ENCODE measurements at regions of chr7 and their contacts with region 1.

Region 1: GRCh38 chr7:35530124-35531109 is 164.5 kb downstream of the HERPUD2 start:
- DNase-seq: no peak
- H3K4me3 ChIP-seq: no peak overlapping the region
- H3K27ac ChIP-seq: no peak overlapping the region
- H3K4me1 ChIP-seq: no peaks in the 10 kb centered on the region
- H3K27me3 ChIP-seq: peaks cover 0 to 4% of the 10 kb centered on the region in 2 donors
- CTCF ChIP-seq: no peak
- POLR2A ChIP-seq: no peak

Region 2: GRCh38 chr7:34190299-34190698 is 1340.1 kb before region 1 on chr7:
- intact Hi-C with region 1: loop called (anchors 5 kb)
- DNase-seq: no peak
- H3K4me3 ChIP-seq: no peak overlapping the region
- H3K27ac ChIP-seq: no peak overlapping the region
- H3K4me1 ChIP-seq: no peaks in the 10 kb centered on the region
- H3K27me3 ChIP-seq: no peaks in the 10 kb centered on the region
- CTCF ChIP-seq: no peak
- POLR2A ChIP-seq: no peak

Measured in breast epithelium (tissue), 4 donors.